ENCODE measurements at regions of chr3 and their contacts with region 1.

Region 1: GRCh38 chr3:10738688-10739372 is 77.2 kb upstream of the SLC6A11 start:
- DNase-seq: peak; percentile 71 to 83
- H3K4me3 ChIP-seq: peak overlapping the region in 3 of 4 donors; percentile 6 to 34 (median 10)
- H3K27ac ChIP-seq: no peak overlapping the region
- H3K4me1 ChIP-seq: peaks cover 4 to 9% (median 7%) of the 10 kb centered on the region in 4 donors
- H3K27me3 ChIP-seq: peaks cover 0 to 79% (median 36%) of the 10 kb centered on the region in 3 donors
- CTCF ChIP-seq: peak in 5 of 7 experiments; percentile 52 to 86 (median 76)
- EP300 ChIP-seq: no peak
- POLR2A ChIP-seq: no peak

Region 2: DNA sequence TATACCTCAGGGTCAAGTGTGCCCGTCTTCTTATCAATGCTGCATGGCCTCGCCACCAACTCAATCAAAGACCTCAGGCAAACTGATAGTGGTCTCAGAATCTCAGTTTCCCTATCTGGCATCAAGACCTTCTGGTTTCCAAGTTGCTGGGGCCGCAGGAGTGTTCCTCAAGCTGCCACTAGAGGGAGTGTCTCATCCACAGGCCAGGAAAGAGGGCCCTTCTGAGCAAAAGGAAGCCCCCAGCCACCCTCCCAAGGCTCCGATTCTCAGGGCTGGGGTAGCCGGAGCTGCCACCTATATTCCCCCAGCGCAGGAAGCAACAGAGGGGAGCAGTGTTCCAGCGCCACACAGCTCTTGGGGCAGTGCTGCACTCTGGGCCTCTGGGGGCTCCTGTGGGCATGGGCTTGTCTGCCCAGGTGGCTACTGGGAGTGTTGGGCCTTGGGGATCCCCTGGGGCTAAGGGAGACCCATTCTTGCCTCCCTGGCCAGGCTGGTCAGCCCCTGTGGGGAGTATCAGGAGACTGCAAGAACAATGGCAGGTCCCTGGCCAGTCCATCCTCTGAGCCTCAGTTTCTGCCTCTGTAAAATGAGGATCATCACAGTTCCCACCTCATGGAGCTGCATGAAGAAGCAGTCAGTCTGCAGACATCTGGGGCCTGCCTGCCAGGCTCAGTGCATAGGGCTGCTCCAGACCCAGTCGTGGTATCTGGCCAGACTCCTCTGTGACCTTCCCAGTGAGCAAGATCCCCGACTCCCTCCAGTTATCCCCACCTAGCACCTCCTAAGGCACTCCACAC is 394.5 kb before region 1 on chr3:
- intact Hi-C with region 1: loop called (anchors 5 kb)
- DNase-seq: peak; percentile 50 to 70
- H3K4me3 ChIP-seq: no peak overlapping the region
- H3K27ac ChIP-seq: no peak overlapping the region
- H3K4me1 ChIP-seq: no peaks in the 10 kb centered on the region
- H3K27me3 ChIP-seq: peaks cover 0 to 9% (median 0%) of the 10 kb centered on the region in 3 donors
- CTCF ChIP-seq: peak in 5 of 7 experiments; percentile 30 to 91 (median 87)
- EP300 ChIP-seq: no peak
- POLR2A ChIP-seq: no peak

Region 3: GRCh38 chr3:10783357-10784351 is 44.8 kb after region 1 on chr3:
- intact Hi-C with region 1: no loop called
- DNase-seq: peak in 1 of 2 donors; percentile 11
- H3K4me3 ChIP-seq: no peak overlapping the region
- H3K27ac ChIP-seq: no peak overlapping the region
- H3K4me1 ChIP-seq: no peaks in the 10 kb centered on the region
- H3K27me3 ChIP-seq: peaks cover 0 to 35% (median 7%) of the 10 kb centered on the region in 3 donors
- CTCF ChIP-seq: peak in 5 of 7 experiments; percentile 17 to 61 (median 58)
- EP300 ChIP-seq: no peak
- POLR2A ChIP-seq: no peak

Measured in stomach (tissue), 19 donors.